A549 (cell line): ENCODE measurements at regions of chr14 and their contacts with region 1.

Region 1: GRCh38 chr14:101628471-101628966 is 67.2 kb downstream of the DIO3 start:
- DNase-seq: peak; percentile 73 to 84
- ATAC-seq: peak; percentile 86 to 95
- H3K4me3 ChIP-seq: no peak overlapping the region
- H3K27ac ChIP-seq: peak overlapping the region; percentile 77 to 90
- H3K4me1 ChIP-seq: peaks cover 19% of the 10 kb centered on the region
- CTCF ChIP-seq: peak; percentile 95
- EP300 ChIP-seq: no peak
- POLR2A ChIP-seq: no peak
- RAD21 ChIP-seq: peak; percentile 96 to 100

Region 2: DNA sequence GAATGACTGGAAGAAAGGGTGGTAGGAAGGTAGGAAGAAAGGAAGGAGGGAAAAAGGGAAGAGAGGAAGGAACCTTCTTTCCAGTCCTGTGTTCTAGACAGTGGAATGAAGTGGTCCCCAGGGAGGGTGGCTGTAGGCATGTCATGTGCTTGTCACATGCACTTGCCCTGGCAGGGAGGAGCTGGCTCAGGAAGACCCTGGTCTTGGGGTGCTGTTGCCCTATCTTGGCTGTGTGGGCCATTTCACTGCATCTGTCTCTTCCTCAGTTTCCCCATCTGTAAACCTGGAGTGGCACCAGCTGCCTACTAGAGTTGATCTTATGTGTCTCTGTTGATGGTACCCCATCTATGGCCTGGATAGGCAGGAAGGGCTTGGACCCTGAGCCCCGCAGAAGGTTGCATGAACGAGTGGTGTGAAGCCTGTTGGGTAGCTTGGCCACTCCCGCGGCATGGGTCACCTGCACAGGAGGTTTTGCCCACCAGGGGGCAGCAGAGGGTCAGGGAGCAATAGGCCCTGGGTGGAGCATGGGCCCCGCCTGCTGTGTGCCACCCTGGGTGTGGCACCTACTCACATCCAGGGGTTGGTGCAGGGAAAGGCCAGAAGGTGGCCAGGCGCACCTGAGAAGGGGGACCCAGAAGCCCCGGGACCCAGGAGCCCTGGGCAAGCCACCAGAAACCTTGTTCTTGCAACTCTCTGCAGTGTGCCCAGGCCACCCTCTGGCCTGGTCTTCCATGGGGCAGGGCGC is 777.5 kb before region 1 on chr14:
- CTCF ChIA-PET with region 1: interaction called, 23 read pairs
- POLR2A ChIA-PET with region 1: no interaction called
- DNase-seq: peak; percentile 69 to 71
- ATAC-seq: peak; percentile 86 to 98
- H3K4me3 ChIP-seq: no peak overlapping the region
- H3K27ac ChIP-seq: peak overlapping the region in 1 of 2 experiments; percentile 65; a peak in 3 of 6 replicates
- H3K4me1 ChIP-seq: peaks cover 7% of the 10 kb centered on the region; the same call in 1 of the 3 replicates
- CTCF ChIP-seq: peak; percentile 79
- EP300 ChIP-seq: no peak
- POLR2A ChIP-seq: no peak
- RAD21 ChIP-seq: peak; percentile 90 to 91

Region 3: GRCh38 chr14:101235335-101236103 is 393.0 kb before region 1 on chr14:
- CTCF ChIA-PET with region 1: interaction called, 34 read pairs
- POLR2A ChIA-PET with region 1: no interaction called
- DNase-seq: peak; percentile 70 to 78
- ATAC-seq: peak; percentile 90 to 98
- H3K4me3 ChIP-seq: no peak overlapping the region
- H3K27ac ChIP-seq: peak overlapping the region; percentile 69 to 85
- H3K4me1 ChIP-seq: peaks cover 11% of the 10 kb centered on the region; the same call in 2 of the 3 replicates
- CTCF ChIP-seq: peak; percentile 89
- EP300 ChIP-seq: no peak
- POLR2A ChIP-seq: no peak
- RAD21 ChIP-seq: peak; percentile 93 to 97

Region 4: GRCh38 chr14:101475456-101476257 is 152.9 kb before region 1 on chr14:
- CTCF ChIA-PET with region 1: interaction called, 16 read pairs
- POLR2A ChIA-PET with region 1: interaction called, 3 read pairs
- DNase-seq: peak; percentile 72 to 85
- ATAC-seq: peak; percentile 44 to 49
- H3K4me3 ChIP-seq: peak overlapping the region; percentile 66
- H3K27ac ChIP-seq: peak overlapping the region; percentile 97 to 99
- H3K4me1 ChIP-seq: peaks cover 56% of the 10 kb centered on the region
- CTCF ChIP-seq: no peak
- EP300 ChIP-seq: peak; percentile 92; a peak in 3 of 5 replicates
- POLR2A ChIP-seq: no peak
- RAD21 ChIP-seq: peak in 1 of 2 experiments; percentile 60; a peak in 3 of 5 replicates

Region 5: GRCh38 chr14:101616202-101616601 is 12.3 kb before region 1 on chr14:
- CTCF ChIA-PET with region 1: interaction called, 10 read pairs
- POLR2A ChIA-PET with region 1: no interaction called
- DNase-seq: no peak
- ATAC-seq: no peak
- H3K4me3 ChIP-seq: no peak overlapping the region
- H3K27ac ChIP-seq: no peak overlapping the region
- H3K4me1 ChIP-seq: no peaks in the 10 kb centered on the region
- CTCF ChIP-seq: no peak
- EP300 ChIP-seq: no peak
- POLR2A ChIP-seq: no peak
- RAD21 ChIP-seq: no peak

Region 6: DNA sequence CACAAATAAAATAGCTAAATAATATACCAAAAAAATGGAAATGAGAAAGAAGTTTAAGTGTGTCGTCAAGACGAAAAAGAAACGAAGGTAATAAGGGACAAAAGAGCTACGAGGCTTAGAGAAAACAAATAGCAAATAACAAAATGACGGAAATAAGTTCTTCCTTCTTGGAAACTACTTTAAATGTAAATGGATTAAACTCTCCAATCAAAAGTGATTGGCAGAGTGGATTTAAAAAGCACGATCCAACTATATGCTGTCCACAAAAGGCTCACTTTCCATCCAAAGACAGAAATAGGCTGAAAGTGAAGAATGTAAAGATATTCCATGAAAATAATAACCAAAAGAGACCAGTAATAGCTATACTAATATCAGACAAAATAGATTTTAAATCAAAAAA is 15.1 kb after region 1 on chr14:
- CTCF ChIA-PET with region 1: interaction called, 17 read pairs
- POLR2A ChIA-PET with region 1: no interaction called
- DNase-seq: no peak
- ATAC-seq: no peak
- H3K4me3 ChIP-seq: no peak overlapping the region
- H3K27ac ChIP-seq: no peak overlapping the region
- H3K4me1 ChIP-seq: no peaks in the 10 kb centered on the region
- CTCF ChIP-seq: no peak
- EP300 ChIP-seq: no peak
- POLR2A ChIP-seq: no peak
- RAD21 ChIP-seq: no peak